ENCODE measurements at regions of chr2 and their contacts with region 1.

Region 1: DNA sequence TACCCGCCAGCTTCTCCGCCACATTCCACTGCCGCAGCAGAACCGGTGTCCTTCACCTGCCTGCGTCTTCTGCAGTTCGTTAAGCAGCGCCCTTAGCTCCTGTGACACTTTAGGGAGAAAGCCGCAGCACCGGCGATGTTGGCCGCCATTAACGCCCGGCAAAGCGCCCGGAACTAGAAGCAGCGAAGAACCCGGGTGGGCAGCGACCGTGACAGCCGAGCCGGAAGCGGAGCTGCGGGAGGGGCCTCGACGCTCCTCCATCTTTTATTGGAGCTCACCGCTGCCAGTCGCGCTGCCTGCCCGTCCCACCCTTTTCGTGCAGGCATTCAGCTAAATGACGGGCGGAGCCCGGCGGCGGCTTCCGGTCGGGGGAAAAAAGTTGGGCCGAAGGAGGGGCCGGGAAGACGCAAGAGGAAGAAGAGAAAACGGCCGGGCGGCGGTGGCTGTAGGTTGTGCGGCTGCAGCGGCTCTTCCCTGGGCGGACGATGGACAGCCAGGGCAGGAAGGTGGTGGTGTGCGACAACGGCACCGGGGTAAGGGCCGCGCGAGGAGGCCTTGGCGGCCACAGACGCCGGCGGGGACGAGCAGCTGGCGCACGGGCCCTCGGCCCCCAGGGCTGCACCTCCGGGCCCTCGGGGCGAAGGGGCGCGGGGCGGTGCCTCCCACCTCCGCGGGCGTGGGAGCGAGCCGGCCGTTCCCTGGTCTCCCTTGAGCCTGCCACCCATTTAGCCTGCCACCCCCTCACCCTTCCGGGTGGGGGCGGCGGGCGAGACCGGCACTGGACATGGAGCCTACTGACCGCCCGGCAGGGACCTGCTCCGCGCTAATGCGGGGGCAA is at the start of gene ACTR2:
- DNase-seq: peak; percentile 96
- ATAC-seq: peak; percentile 96
- H3K4me3 ChIP-seq: peak within 1 kb of the TSS; percentile 90
- H3K27ac ChIP-seq: peak within 1 kb of the TSS; percentile 98
- H3K4me1 ChIP-seq: peaks cover 6% of the 10 kb centered on the region
- H3K27me3 ChIP-seq: no peaks in the 10 kb centered on the region
- CTCF ChIP-seq: no peak
- POLR2A ChIP-seq: peak; percentile 92
- RAD21 ChIP-seq: no peak
- total RNA-seq, gene ACTR2: 205 and 224 TPM in 2 replicates

Region 2: GRCh38 chr2:64797881-64798575 is 429.6 kb before region 1 on chr2:
- CTCF ChIA-PET with region 1: no interaction called
- POLR2A ChIA-PET with region 1: interaction called, 11 read pairs
- dilution Hi-C with region 1: no loop called
- in situ Hi-C with region 1: no loop called
- intact Hi-C with region 1: no loop called
- DNase-seq: peak; percentile 75
- ATAC-seq: peak; percentile 57
- H3K4me3 ChIP-seq: no peak overlapping the region
- H3K27ac ChIP-seq: no peak overlapping the region
- H3K4me1 ChIP-seq: peaks cover 12% of the 10 kb centered on the region
- H3K27me3 ChIP-seq: peaks cover 5% of the 10 kb centered on the region
- CTCF ChIP-seq: no peak
- POLR2A ChIP-seq: no peak
- RAD21 ChIP-seq: no peak

Region 3: GRCh38 chr2:65116645-65117044 is 111.0 kb before region 1 on chr2:
- CTCF ChIA-PET with region 1: no interaction called
- POLR2A ChIA-PET with region 1: interaction called, 22 read pairs
- dilution Hi-C with region 1: no loop called
- in situ Hi-C with region 1: no loop called
- intact Hi-C with region 1: no loop called
- DNase-seq: no peak
- ATAC-seq: no peak
- H3K4me3 ChIP-seq: no peak overlapping the region
- H3K27ac ChIP-seq: no peak overlapping the region
- H3K4me1 ChIP-seq: peaks cover 4% of the 10 kb centered on the region
- H3K27me3 ChIP-seq: no peaks in the 10 kb centered on the region
- CTCF ChIP-seq: no peak
- POLR2A ChIP-seq: no peak
- RAD21 ChIP-seq: no peak

Region 4: DNA sequence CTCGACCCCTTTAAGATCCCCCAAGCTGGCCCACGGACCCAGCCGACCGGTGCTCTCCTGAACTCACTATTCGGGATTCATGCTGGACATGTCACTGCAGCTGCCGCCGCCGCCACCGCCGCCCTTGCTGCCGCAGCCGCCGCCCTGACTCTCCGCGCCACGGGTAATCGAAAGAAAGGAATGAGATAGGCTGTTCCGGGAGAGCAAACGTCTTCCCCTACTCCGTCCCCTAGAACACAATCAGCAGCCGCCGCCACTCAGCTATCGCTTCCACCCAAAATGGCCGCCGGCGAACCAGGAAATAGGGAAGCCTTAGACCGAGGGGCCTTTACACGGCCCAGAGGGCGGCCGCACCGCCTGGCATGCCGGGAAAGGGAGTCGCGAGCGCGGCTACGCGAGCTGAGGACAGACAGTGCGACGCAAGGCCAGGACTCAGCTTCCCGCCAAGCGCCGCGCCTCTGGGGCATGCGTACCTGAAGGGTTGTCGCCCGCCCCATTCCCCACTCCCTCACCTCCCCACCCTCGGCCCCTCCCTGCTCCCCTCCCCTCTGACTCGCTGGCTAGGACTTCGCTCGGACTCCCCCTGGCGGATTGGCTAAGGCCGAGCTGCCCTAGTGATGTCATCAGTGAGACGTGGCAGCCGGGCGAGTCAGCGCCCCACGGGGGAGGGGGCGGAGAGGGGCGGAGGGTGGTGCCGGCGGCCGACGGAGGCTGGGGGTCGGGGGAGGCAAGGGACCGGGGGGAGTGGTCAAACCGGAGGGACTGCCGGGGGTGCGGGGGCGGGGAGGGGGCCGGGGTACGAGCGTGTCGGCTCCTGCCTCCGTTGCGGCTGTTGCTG is 97.6 kb before region 1 on chr2 and contains the start of gene RAB1A:
- CTCF ChIA-PET with region 1: no interaction called
- POLR2A ChIA-PET with region 1: no interaction called
- dilution Hi-C with region 1: no loop called
- in situ Hi-C with region 1: no loop called
- intact Hi-C with region 1: loop called (anchors 5 kb)
- DNase-seq: peak; percentile 100
- ATAC-seq: peak; percentile 93
- H3K4me3 ChIP-seq: peak within 1 kb of the TSS; percentile 72
- H3K27ac ChIP-seq: peak within 1 kb of the TSS; percentile 96
- H3K4me1 ChIP-seq: peaks cover 5% of the 10 kb centered on the region
- H3K27me3 ChIP-seq: no peaks in the 10 kb centered on the region
- CTCF ChIP-seq: peak; percentile 49
- POLR2A ChIP-seq: peak; percentile 93
- RAD21 ChIP-seq: no peak
- total RNA-seq, gene RAB1A: 114 and 127 TPM in 2 replicates

Region 5: GRCh38 chr2:65186872-65187851 is 40.5 kb before region 1 on chr2:
- CTCF ChIA-PET with region 1: no interaction called
- POLR2A ChIA-PET with region 1: interaction called, 15 read pairs
- dilution Hi-C with region 1: no loop called
- in situ Hi-C with region 1: no loop called
- intact Hi-C with region 1: no loop called
- DNase-seq: peak; percentile 75
- ATAC-seq: peak; percentile 99
- H3K4me3 ChIP-seq: no peak overlapping the region
- H3K27ac ChIP-seq: no peak overlapping the region
- H3K4me1 ChIP-seq: peaks cover 3% of the 10 kb centered on the region; the same call in 1 of the 2 replicates
- H3K27me3 ChIP-seq: peaks cover 2% of the 10 kb centered on the region; the same call in 1 of the 2 replicates
- CTCF ChIP-seq: peak; percentile 82
- POLR2A ChIP-seq: no peak
- RAD21 ChIP-seq: peak; percentile 74

Region 6: DNA sequence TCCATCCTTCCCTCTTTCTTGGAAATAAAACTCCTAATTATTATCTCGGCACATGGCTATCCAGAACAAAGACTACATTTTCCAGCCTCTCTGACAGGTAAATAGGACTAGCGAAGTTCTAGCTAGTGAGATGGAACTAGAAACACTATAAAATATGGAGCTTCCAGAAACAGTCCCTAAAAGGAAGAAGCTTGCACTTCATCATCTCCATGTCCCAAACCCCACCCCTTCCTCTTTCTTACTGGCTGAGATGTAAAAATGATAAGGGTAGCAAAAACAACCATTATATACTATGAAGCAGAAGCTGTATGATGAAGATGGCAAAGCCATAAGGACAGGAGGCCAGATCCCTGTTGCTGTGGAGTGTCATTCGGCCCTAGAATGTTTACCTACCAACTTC is 11.7 kb before region 1 on chr2:
- CTCF ChIA-PET with region 1: no interaction called
- POLR2A ChIA-PET with region 1: interaction called, 11 read pairs
- dilution Hi-C with region 1: no loop called
- in situ Hi-C with region 1: no loop called
- intact Hi-C with region 1: no loop called
- DNase-seq: no peak
- ATAC-seq: no peak
- H3K4me3 ChIP-seq: no peak overlapping the region
- H3K27ac ChIP-seq: no peak overlapping the region
- H3K4me1 ChIP-seq: no peaks in the 10 kb centered on the region
- H3K27me3 ChIP-seq: no peaks in the 10 kb centered on the region
- CTCF ChIP-seq: no peak
- POLR2A ChIP-seq: no peak
- RAD21 ChIP-seq: no peak

Region 7: DNA sequence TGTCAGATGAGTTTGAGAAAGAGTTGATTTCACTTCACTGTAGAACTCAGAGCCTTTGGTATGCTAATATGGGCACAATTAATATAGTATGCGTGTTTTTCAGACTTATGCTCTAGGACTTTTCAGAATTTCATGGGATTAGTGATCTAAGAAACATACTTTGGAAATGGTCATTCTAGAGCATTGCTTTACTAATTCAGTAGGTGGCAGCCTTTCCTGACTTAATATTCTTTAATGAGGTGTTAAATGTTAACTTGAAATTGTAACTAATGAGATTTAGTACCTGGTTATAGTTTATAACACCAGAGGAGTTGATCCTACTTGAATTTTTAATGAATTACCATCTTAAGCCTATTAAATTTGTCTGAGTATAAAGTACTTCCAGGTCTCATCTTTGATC is 28.4 kb after region 1 on chr2:
- CTCF ChIA-PET with region 1: no interaction called
- POLR2A ChIA-PET with region 1: interaction called, 19 read pairs
- dilution Hi-C with region 1: no loop called
- in situ Hi-C with region 1: no loop called
- intact Hi-C with region 1: no loop called
- DNase-seq: no peak
- ATAC-seq: no peak
- H3K4me3 ChIP-seq: no peak overlapping the region
- H3K27ac ChIP-seq: no peak overlapping the region
- H3K4me1 ChIP-seq: no peaks in the 10 kb centered on the region
- H3K27me3 ChIP-seq: no peaks in the 10 kb centered on the region
- CTCF ChIP-seq: peak; percentile 18; the same call in 1 of the 2 replicates
- POLR2A ChIP-seq: no peak
- RAD21 ChIP-seq: no peak